ENCODE measurements at regions of chr1 and their contacts with region 1.

Region 1: DNA sequence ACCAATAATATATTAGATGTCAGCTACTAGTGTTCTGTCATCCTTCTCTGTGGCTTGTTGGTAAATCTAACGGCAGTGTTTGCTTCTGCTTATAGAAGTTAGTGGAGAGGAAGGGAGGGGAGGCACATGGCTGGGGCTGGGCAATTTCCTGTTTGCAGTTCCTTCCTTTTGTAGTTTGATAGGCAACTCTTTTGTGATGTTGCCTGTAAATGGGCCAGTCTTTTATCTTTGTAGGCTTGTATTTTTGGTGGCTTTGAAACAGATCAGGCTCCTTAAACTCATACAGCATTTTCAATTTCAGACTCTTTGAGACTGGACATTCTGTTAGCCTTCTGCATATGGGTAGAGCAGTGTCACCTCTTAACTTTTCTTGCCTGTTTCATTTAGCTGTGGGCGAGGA is 48.1 kb downstream of the CDC14A start:
- DNase-seq: no peak
- ATAC-seq: no peak
- H3K4me3 ChIP-seq: no peak overlapping the region
- H3K27ac ChIP-seq: no peak overlapping the region
- H3K4me1 ChIP-seq: no peaks in the 10 kb centered on the region
- H3K27me3 ChIP-seq: no peaks in the 10 kb centered on the region
- CTCF ChIP-seq: no peak
- POLR2A ChIP-seq: no peak
- RAD21 ChIP-seq: no peak

Region 2: DNA sequence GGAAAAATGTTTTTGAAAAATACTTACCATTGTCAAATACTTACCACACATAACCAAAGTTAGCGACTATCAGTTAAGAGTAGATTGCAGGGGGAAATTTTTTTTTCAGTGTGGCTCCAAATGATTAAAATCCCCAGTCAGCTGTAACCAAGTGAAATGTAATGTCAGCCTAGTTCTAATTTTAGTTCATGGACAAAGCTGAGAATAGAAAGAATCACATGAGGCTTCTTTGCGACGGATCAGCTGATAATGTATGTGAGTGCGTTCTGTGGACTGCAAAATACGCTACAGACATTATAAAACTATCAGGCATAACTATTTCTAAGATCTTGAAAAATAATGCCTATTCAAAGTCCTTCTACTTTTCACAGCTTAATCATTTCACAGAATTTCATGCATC is 222.3 kb before region 1 on chr1 and contains the start of gene LRRC39:
- CTCF ChIA-PET with region 1: no interaction called
- POLR2A ChIA-PET with region 1: no interaction called
- RAD21 ChIA-PET with region 1: no interaction called
- intact Hi-C with region 1: loop called (anchors 5 kb)
- DNase-seq: no peak
- ATAC-seq: no peak
- H3K4me3 ChIP-seq: no peak within 1 kb of the TSS
- H3K27ac ChIP-seq: no peak within 1 kb of the TSS
- H3K4me1 ChIP-seq: no peaks in the 10 kb centered on the region
- H3K27me3 ChIP-seq: no peaks in the 10 kb centered on the region
- CTCF ChIP-seq: no peak
- POLR2A ChIP-seq: no peak
- RAD21 ChIP-seq: no peak
- total RNA-seq, gene LRRC39: 0.54 TPM

Measured in HCT116 (cell line).